ENCODE measurements at regions of chr15 and their contacts with region 1.

Region 1: DNA sequence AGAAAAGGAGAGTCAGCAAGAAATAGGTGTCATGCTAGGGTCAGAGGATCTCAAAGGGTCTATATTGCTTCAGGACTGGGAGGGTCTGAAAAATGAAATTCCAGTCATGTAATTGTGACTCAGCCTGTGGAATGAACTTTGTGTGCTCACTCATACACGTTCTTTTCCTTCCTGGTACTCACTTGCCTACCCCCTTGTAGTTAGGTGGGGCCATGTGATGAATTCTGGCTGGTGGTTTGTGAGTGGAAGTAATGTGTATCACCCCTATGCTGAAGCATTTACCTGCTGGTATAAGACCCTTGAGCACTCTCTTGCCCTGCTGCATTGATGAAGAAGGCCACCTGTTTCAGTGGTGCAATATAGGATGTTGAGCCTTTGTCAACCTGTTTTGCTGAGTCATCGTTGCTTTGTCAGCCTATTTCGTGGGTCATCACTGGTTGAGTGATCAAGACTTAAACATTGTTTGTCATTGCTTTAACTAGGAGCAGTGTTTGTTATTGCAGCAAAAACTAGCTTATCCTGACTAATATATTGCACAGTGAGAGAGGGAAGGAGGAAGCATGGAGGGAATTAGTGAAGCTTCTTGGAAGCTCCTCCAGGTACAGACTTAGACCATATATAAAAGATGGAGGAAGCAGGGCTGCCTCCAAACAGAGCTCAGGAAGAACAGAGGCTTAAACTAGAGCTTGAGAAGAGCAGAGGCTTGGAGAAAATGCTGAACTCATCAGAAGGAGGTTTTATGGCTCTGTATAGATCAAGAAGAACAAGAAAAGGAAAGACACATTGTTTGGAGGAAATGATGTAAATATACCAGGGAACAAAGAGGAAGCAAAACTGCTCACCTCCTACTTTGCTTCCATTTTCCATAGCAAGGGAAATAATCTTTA is 28.9 kb downstream of the TLNRD1 start:
- DNase-seq: no peak
- ATAC-seq: peak; percentile 52

Region 2: GRCh38 chr15:81091889-81092558 is 62.4 kb after region 1 on chr15:
- intact Hi-C with region 1: loop called (anchors 5 kb)
- DNase-seq: no peak
- ATAC-seq: peak; percentile 87

Measured in Right ventricle myocardium inferior (tissue), 1 donor.